ENCODE measurements at regions of chr4 and their contacts with region 1.

Region 1: GRCh38 chr4:52983563-52984303 is 121.6 kb downstream of the RASL11B start:
- DNase-seq: no peak
- ATAC-seq: peak; percentile 70 to 79
- H3K4me3 ChIP-seq: no peak overlapping the region
- H3K27ac ChIP-seq: no peak overlapping the region
- H3K4me1 ChIP-seq: peaks cover 0 to 6% of the 10 kb centered on the region in 2 donors
- H3K27me3 ChIP-seq: no peaks in the 10 kb centered on the region
- CTCF ChIP-seq: peak; percentile 40 to 77 (median 56)
- POLR2A ChIP-seq: no peak

Region 2: GRCh38 chr4:52234561-52235440 is 748.9 kb before region 1 on chr4:
- in situ Hi-C with region 1: loop called (anchors 10 to 25 kb)
- intact Hi-C with region 1: loop called (anchors 5 kb)
- DNase-seq: no peak
- ATAC-seq: peak; percentile 77 to 82
- H3K4me3 ChIP-seq: no peak overlapping the region
- H3K27ac ChIP-seq: no peak overlapping the region
- H3K4me1 ChIP-seq: no peaks in the 10 kb centered on the region
- H3K27me3 ChIP-seq: no peaks in the 10 kb centered on the region
- CTCF ChIP-seq: peak in 4 of 5 experiments; percentile 22 to 44 (median 37)
- POLR2A ChIP-seq: no peak

Region 3: DNA sequence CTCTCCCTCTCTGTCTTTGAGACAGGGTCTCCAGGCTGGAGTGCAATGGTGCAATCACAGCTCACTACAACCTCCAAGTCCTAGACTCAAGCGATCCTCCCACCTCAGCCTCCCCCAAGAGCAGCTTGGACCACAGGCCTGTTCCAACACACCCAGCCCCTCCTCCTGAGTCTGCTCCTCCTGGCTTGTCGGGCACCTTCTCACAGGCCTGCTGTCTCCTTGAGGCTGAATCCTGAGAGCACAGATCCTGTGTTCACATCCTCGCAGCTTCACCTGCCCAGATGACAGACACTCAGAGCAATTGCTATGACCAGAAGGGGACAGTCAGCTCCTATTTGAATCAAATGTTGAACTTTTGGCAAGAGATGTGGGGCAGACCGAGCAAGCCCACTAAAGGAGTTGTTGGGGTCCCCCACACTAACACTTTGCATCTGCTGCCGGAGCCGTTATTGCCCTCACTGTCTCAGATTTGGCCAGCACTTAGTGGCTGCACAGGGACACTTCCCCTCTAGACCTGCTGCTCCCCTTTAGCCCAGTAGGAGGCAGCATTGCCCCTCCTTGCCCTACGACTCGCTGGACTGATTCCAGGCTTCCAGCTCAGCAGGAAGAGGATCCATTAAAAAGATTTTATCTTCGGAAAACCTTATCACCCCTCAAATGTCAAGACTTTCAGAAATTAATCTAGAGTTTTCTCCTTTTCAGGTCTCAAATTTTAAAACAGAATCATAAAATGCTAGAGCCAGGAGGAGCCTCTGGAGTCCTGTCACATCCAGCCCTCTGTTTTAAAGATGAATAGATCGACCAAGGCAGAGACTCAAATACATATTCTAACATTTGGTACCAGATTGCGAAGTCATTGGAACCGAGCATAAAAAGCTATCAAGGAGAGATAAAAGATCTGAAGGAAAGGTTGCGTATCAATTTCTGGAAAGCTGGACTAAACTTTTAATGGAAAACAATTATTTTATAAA is 438.3 kb before region 1 on chr4:
- in situ Hi-C with region 1: loop called (anchors 5 to 10 kb)
- intact Hi-C with region 1: loop called (anchors 2 kb)
- DNase-seq: peak; percentile 31 to 55
- ATAC-seq: peak; percentile 81 to 90
- H3K4me3 ChIP-seq: no peak overlapping the region
- H3K27ac ChIP-seq: no peak overlapping the region
- H3K4me1 ChIP-seq: peaks cover 0 to 5% of the 10 kb centered on the region in 2 donors
- H3K27me3 ChIP-seq: no peaks in the 10 kb centered on the region
- CTCF ChIP-seq: peak; percentile 73 to 94 (median 87)
- POLR2A ChIP-seq: no peak

Region 4: DNA sequence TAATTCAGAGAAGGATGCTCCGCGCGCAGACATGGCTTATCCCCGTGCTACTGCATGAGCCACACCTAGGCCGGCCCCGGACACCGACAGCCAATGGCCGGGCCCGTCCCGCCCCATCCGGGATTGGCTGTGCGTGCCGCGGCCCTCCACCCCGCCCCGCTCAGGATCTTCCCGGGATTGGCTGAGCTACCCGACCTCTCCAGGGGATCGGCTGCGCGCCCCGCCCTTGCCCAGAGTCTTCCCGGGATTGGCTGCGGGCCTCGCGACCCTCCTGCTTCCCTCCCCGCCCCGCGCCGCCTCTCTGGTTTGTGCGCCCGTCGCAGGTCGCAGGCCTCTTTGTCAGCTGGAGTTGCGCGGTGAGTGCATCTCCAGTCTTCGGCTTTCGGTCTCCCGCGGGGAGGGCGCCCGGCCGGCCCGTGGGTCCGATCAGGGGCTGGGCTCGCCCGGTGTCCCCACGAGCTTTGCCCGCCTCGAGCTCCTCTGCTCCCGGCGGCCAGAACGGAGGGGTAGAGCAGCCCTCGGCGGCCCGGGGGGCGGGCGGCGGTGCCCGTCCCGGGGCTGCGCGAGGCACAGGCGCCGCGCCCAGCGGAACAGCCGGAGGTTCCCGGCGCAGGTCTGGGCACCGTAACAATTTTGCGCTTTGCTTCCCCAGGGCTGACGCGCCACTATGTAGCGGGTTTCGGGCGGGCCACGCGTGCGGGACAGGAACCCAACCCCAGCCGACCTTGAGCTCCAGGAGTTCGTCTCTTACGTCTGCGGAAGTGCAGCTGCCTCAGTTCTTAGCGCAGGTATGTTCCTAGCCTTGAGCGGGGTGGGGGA is 271.4 kb before region 1 on chr4:
- in situ Hi-C with region 1: loop called in 1 of 4 experiments (anchors 25 kb)
- intact Hi-C with region 1: loop called (anchors 5 kb)
- DNase-seq: peak; percentile 97 to 99
- ATAC-seq: peak; percentile 92 to 95
- H3K4me3 ChIP-seq: peak overlapping the region; percentile 47 to 94 (median 72)
- H3K27ac ChIP-seq: peak overlapping the region; percentile 87 to 97 (median 96)
- H3K4me1 ChIP-seq: peaks cover 18 to 21% of the 10 kb centered on the region in 2 donors
- H3K27me3 ChIP-seq: no peaks in the 10 kb centered on the region
- CTCF ChIP-seq: no peak
- POLR2A ChIP-seq: peak; percentile 93 to 97

Region 5: DNA sequence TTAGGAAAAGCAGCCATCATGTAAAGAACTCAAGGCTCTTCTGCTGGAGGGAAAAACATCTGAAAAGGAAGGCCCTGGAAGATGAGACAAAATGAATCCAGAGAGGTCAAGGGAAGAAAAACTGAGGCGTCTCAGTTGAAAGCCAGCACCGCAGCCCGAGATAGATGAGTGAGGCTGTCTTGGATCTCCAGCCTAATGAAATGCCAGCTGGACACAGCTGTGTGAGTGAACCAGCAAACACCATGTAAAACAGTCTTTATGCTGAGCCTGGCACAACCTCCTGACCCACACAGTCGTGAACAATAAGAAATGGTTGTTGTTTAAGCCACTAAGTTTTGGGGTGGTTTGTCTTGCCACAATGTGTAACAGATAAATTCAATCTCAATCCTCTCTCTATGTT is 170.2 kb before region 1 on chr4:
- in situ Hi-C with region 1: no loop called
- intact Hi-C with region 1: no loop called
- DNase-seq: no peak
- ATAC-seq: no peak
- H3K4me3 ChIP-seq: no peak overlapping the region
- H3K27ac ChIP-seq: no peak overlapping the region
- H3K4me1 ChIP-seq: no peaks in the 10 kb centered on the region
- H3K27me3 ChIP-seq: no peaks in the 10 kb centered on the region
- CTCF ChIP-seq: no peak
- POLR2A ChIP-seq: no peak

Region 6: GRCh38 chr4:52894443-52894842 is 89.3 kb before region 1 on chr4:
- in situ Hi-C with region 1: no loop called
- intact Hi-C with region 1: no loop called
- DNase-seq: no peak
- ATAC-seq: no peak
- H3K4me3 ChIP-seq: no peak overlapping the region
- H3K27ac ChIP-seq: no peak overlapping the region
- H3K4me1 ChIP-seq: no peaks in the 10 kb centered on the region
- H3K27me3 ChIP-seq: no peaks in the 10 kb centered on the region
- CTCF ChIP-seq: no peak
- POLR2A ChIP-seq: no peak

Region 7: DNA sequence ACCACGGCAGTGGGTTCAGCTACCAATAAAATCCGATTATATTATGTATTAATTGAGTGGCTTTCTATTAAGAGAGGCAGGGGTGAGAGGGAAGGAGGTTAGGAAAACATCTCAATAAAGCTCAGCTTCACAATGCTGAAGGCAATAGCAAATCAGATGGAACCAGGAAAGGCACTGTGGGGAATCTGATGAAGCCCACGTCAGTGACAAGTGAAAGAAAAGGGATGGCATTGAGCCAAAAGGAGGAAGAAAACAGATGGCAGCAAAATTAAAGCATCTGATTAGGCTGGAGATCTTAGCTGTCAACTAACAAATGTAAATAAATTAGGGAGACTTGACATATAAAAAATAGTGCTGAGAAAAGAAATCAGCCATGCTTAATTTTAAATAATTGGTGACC is 59.3 kb after region 1 on chr4:
- in situ Hi-C with region 1: no loop called
- intact Hi-C with region 1: no loop called
- DNase-seq: no peak
- ATAC-seq: no peak
- H3K4me3 ChIP-seq: no peak overlapping the region
- H3K27ac ChIP-seq: no peak overlapping the region
- H3K4me1 ChIP-seq: peaks cover 18 to 20% of the 10 kb centered on the region in 2 donors
- H3K27me3 ChIP-seq: no peaks in the 10 kb centered on the region
- CTCF ChIP-seq: no peak
- POLR2A ChIP-seq: no peak

Measured in gastrocnemius medialis (tissue), 4 donors.